ENCODE measurements at regions of chr19 and their contacts with region 1.

Region 1: GRCh38 chr19:3105641-3106466 is 11.7 kb downstream of the GNA11 start:
- DNase-seq: no peak
- H3K4me3 ChIP-seq: no peak overlapping the region
- H3K27ac ChIP-seq: no peak overlapping the region
- H3K4me1 ChIP-seq: peaks cover 10 to 79% (median 41%) of the 10 kb centered on the region in 6 donors
- H3K27me3 ChIP-seq: peaks cover 0 to under 1% (median 0%) of the 10 kb centered on the region in 7 donors
- CTCF ChIP-seq: no peak
- POLR2A ChIP-seq: no peak

Region 2: DNA sequence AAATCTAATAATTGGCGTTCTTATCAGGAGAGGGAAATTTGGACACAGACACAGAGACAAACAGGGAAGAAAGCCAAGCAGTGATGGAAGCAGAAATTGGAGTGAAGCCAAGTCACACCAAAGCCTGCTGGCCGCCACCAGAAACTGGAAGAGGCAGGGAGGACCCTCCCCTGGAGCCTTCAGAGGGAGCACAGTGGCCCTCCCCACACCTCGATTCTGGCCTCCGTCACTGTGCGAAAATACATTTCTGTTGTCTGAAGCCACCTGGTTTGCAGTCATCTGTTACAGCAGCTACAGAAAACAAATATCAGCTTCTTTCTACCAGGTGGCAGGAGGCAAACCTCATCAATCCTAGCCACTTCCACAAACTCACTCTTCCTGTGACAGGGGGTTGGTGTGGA is 136.8 kb before region 1 on chr19:
- intact Hi-C with region 1: loop called (anchors 2 kb)
- DNase-seq: no peak
- H3K4me3 ChIP-seq: no peak overlapping the region
- H3K27ac ChIP-seq: peak overlapping the region in 7 of 8 donors; percentile 29 to 85 (median 78)
- H3K4me1 ChIP-seq: peaks cover 7 to 72% (median 51%) of the 10 kb centered on the region in 6 donors
- H3K27me3 ChIP-seq: peaks cover 0 to 4% (median 0%) of the 10 kb centered on the region in 7 donors
- CTCF ChIP-seq: no peak
- POLR2A ChIP-seq: no peak

Region 3: DNA sequence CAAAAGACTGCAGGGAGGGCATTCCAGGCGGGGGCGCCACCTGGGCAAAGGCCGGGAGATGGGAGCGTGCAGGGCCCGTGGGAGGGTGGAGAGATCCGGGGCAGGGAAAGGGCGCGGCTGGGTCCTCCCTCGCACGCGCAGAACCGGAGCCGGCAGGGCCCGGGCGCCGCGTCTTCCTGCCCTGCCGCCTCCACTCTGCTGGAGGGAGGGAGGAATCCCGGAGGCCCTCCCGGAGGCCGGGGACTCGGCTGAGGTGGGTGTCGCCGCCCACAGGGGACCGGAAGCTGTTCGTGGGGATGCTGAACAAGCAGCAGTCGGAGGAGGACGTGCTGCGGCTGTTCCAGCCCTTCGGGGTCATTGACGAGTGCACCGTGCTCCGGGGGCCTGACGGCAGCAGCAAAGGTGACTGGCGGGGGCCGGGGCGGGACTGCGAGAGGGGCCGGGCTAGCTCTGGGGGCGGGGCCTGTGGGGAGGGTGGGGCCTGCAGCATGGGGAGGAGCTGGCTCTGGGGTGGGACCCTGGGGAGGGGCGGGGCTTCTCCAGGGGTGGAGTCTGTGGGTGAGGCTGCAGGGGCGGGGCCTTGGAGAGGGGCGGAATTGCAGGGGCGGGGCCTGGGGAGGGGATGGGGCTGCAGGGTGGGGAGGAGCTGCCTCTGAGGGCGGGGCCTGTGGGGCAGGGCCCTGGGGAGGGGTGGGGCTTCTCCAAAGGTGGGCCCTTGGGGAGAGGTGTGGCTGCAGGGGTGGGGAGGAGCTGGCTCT is 169.9 kb after region 1 on chr19:
- intact Hi-C with region 1: no loop called
- DNase-seq: peak; percentile 93
- H3K4me3 ChIP-seq: peak overlapping the region; percentile 23 to 73 (median 40)
- H3K27ac ChIP-seq: peak overlapping the region in 3 of 8 donors; percentile 48 to 66 (median 52)
- H3K4me1 ChIP-seq: peaks cover 2 to 23% (median 9%) of the 10 kb centered on the region in 6 donors
- H3K27me3 ChIP-seq: peaks cover 0 to 87% (median 37%) of the 10 kb centered on the region in 7 donors
- CTCF ChIP-seq: peak in 3 of 11 experiments; percentile 9 to 54 (median 26)
- POLR2A ChIP-seq: no peak